MCF 10A (cell line): ENCODE measurements at regions of chr1 and their contacts with region 1.

Region 1: GRCh38 chr1:171313835-171314320 is at the start of gene FMO4:
- DNase-seq: peak; percentile 100
- H3K4me3 Mint-ChIP-seq: peak within 1 kb of the TSS; percentile 64
- H3K27ac Mint-ChIP-seq: peak within 1 kb of the TSS; percentile 79
- H3K4me1 Mint-ChIP-seq: peaks cover 6% of the 10 kb centered on the region
- H3K27me3 Mint-ChIP-seq: no peaks in the 10 kb centered on the region
- CTCF ChIP-seq: peak; percentile 85
- total RNA-seq, gene FMO4: 0.63 and 1.5 TPM in 2 replicates

Region 2: GRCh38 chr1:170903961-170904360 is 409.9 kb before region 1 on chr1:
- CTCF ChIA-PET with region 1: no interaction called
- POLR2A ChIA-PET with region 1: no interaction called
- intact Hi-C with region 1: no loop called
- DNase-seq: no peak
- H3K4me3 Mint-ChIP-seq: no peak overlapping the region
- H3K27ac Mint-ChIP-seq: no peak overlapping the region
- H3K4me1 Mint-ChIP-seq: no peaks in the 10 kb centered on the region
- H3K27me3 Mint-ChIP-seq: no peaks in the 10 kb centered on the region
- CTCF ChIP-seq: no peak

Region 3: GRCh38 chr1:171188388-171189266 is 125.3 kb before region 1 on chr1:
- CTCF ChIA-PET with region 1: interaction called, 7 read pairs
- POLR2A ChIA-PET with region 1: no interaction called
- intact Hi-C with region 1: loop called (anchors 2 kb)
- DNase-seq: peak; percentile 87
- H3K4me3 Mint-ChIP-seq: no peak overlapping the region
- H3K27ac Mint-ChIP-seq: no peak overlapping the region
- H3K4me1 Mint-ChIP-seq: no peaks in the 10 kb centered on the region
- H3K27me3 Mint-ChIP-seq: no peaks in the 10 kb centered on the region
- CTCF ChIP-seq: peak; percentile 94

Region 4: GRCh38 chr1:171226747-171227370 is 87.0 kb before region 1 on chr1:
- CTCF ChIA-PET with region 1: interaction called, 110 read pairs
- POLR2A ChIA-PET with region 1: interaction called, 4 read pairs
- intact Hi-C with region 1: no loop called
- DNase-seq: peak; percentile 85
- H3K4me3 Mint-ChIP-seq: no peak overlapping the region
- H3K27ac Mint-ChIP-seq: no peak overlapping the region
- H3K4me1 Mint-ChIP-seq: peaks cover 21% of the 10 kb centered on the region
- H3K27me3 Mint-ChIP-seq: no peaks in the 10 kb centered on the region
- CTCF ChIP-seq: peak; percentile 96

Region 5: GRCh38 chr1:171279678-171280077 is 34.2 kb before region 1 on chr1:
- CTCF ChIA-PET with region 1: interaction called, 10 read pairs
- POLR2A ChIA-PET with region 1: no interaction called
- intact Hi-C with region 1: no loop called
- DNase-seq: no peak
- H3K4me3 Mint-ChIP-seq: no peak overlapping the region
- H3K27ac Mint-ChIP-seq: no peak overlapping the region
- H3K4me1 Mint-ChIP-seq: no peaks in the 10 kb centered on the region
- H3K27me3 Mint-ChIP-seq: no peaks in the 10 kb centered on the region
- CTCF ChIP-seq: no peak

Region 6: GRCh38 chr1:171397851-171398469 is 84.1 kb after region 1 on chr1:
- CTCF ChIA-PET with region 1: interaction called, 33 read pairs
- POLR2A ChIA-PET with region 1: no interaction called
- intact Hi-C with region 1: no loop called
- DNase-seq: no peak
- H3K4me3 Mint-ChIP-seq: no peak overlapping the region
- H3K27ac Mint-ChIP-seq: no peak overlapping the region
- H3K4me1 Mint-ChIP-seq: peaks cover 9% of the 10 kb centered on the region
- H3K27me3 Mint-ChIP-seq: no peaks in the 10 kb centered on the region
- CTCF ChIP-seq: no peak